Panc1 (cell line): ENCODE measurements at regions of chr3 and their contacts with region 1.

Region 1: DNA sequence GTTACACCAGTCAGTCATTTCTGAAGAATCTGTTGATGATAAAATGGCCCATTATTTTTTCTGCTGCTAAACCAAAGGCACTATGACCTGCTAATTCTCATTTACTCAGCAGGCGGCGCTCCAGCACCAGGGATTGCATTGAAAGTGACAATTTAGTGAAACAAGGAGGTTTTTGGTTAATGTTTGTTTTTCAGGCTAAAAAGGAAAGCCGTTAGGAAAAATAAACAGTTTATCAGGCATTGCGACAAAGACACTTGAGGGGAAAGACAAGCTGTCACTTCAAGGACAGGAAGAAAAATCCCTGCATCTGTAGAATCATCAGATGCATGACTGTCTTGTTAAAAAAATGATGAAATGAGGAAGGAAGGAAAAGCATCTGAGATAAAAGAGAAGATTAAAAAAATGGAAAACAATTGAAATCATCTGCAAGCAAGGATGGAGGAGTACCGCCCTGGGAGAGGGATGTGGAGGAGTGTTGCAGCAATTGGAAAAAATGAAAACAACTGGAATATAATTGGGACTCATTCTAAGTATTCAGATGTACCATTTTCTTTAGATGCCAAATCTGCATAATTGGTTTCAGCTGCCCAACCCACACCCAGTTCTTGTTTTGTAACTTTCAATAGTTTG is 54.0 kb downstream of the NR1D2 start:
- DNase-seq: peak; percentile 36
- ATAC-seq: no peak
- H3K4me3 ChIP-seq: no peak overlapping the region
- H3K27ac ChIP-seq: no peak overlapping the region
- H3K4me1 ChIP-seq: no peaks in the 10 kb centered on the region
- H3K27me3 ChIP-seq: no peaks in the 10 kb centered on the region
- CTCF ChIP-seq: peak; percentile 88

Region 2: GRCh38 chr3:23961066-23961465 is 38.1 kb before region 1 on chr3:
- CTCF ChIA-PET with region 1: no interaction called
- POLR2A ChIA-PET with region 1: interaction called, 13 read pairs
- in situ Hi-C with region 1: no loop called
- intact Hi-C with region 1: no loop called
- DNase-seq: no peak
- ATAC-seq: no peak
- H3K4me3 ChIP-seq: no peak overlapping the region
- H3K27ac ChIP-seq: no peak overlapping the region; the same call in 1 of the 2 replicates
- H3K4me1 ChIP-seq: peaks cover 20% of the 10 kb centered on the region
- H3K27me3 ChIP-seq: no peaks in the 10 kb centered on the region
- CTCF ChIP-seq: no peak

Region 3: GRCh38 chr3:24237971-24238767 is 239.0 kb after region 1 on chr3:
- CTCF ChIA-PET with region 1: no interaction called
- POLR2A ChIA-PET with region 1: no interaction called
- in situ Hi-C with region 1: no loop called
- intact Hi-C with region 1: loop called (anchors 2 kb)
- DNase-seq: peak; percentile 67
- ATAC-seq: peak; percentile 87
- H3K4me3 ChIP-seq: no peak overlapping the region
- H3K27ac ChIP-seq: no peak overlapping the region
- H3K4me1 ChIP-seq: peaks cover 4% of the 10 kb centered on the region; the same call in 1 of the 2 replicates
- H3K27me3 ChIP-seq: no peaks in the 10 kb centered on the region
- CTCF ChIP-seq: peak; percentile 73

Region 4: DNA sequence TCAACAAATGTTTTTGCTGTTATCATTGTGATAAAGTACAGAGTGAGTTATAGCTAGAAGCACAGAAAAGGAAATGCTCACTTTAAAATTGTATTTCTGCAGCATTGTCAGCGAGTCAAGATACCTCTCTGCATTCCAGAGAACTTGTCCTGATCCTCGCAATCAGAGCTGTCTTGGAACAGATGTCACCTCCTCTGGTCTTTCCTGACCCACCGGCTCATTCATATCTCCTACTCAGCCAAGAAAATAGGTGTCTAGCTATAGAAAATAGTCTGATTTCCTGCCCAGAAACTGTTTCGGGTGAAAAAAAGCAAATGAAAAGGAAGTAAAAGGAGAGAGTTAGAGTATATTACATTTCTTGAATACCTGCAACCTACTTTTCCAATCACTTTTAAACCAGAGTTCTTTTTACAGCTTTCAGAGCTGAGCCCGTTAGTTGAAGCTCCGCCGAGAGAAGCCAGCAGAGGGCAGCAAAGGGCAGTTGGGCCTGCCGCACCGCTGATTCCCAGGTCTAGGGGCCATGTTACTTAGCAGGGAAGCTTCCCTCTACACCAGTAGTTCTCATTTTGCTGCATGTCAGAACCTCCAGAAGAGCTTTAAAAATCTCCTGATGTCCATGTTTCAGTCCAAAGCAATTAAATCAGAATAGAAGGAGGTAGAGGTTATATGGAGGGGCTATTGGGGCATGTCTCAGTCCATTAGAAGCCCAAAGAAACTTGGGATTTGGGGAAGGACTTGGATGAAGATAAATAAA is 681.3 kb after region 1 on chr3:
- CTCF ChIA-PET with region 1: no interaction called
- POLR2A ChIA-PET with region 1: no interaction called
- in situ Hi-C with region 1: no loop called
- intact Hi-C with region 1: loop called (anchors 5 kb)
- DNase-seq: peak; percentile 33
- ATAC-seq: peak; percentile 78
- H3K4me3 ChIP-seq: no peak overlapping the region
- H3K27ac ChIP-seq: no peak overlapping the region
- H3K4me1 ChIP-seq: no peaks in the 10 kb centered on the region
- H3K27me3 ChIP-seq: no peaks in the 10 kb centered on the region
- CTCF ChIP-seq: peak; percentile 87